Naive thymus-derived CD4-positive, alpha-beta T cell (primary cell): ENCODE measurements at regions of chr17 and their contacts with region 1.

Region 1: GRCh38 chr17:32461853-32462617 is 17.7 kb downstream of the PSMD11 start:
- DNase-seq: peak; percentile 27 to 71 (median 63)
- ATAC-seq: peak; percentile 91
- H3K4me3 ChIP-seq: no peak overlapping the region
- H3K4me3 Mint-ChIP-seq: peak overlapping the region in 1 of 10 donors; percentile 15
- H3K27ac ChIP-seq: no peak overlapping the region
- H3K27ac Mint-ChIP-seq: peak overlapping the region in 7 of 9 donors; percentile 0 to 87 (median 19)
- H3K4me1 ChIP-seq: peaks cover 8 to 9% of the 10 kb centered on the region in 2 donors
- H3K4me1 Mint-ChIP-seq: peaks cover 25 to 43% (median 31%) of the 10 kb centered on the region in 7 donors
- H3K27me3 ChIP-seq: no peaks in the 10 kb centered on the region
- H3K27me3 Mint-ChIP-seq: no peaks in the 10 kb centered on the region

Region 2: GRCh38 chr17:32239456-32239855 is 222.6 kb before region 1 on chr17:
- CTCF ChIA-PET with region 1: no interaction called
- POLR2A ChIA-PET with region 1: no interaction called
- intact Hi-C with region 1: no loop called
- DNase-seq: no peak
- ATAC-seq: no peak
- H3K4me3 ChIP-seq: no peak overlapping the region
- H3K4me3 Mint-ChIP-seq: no peak overlapping the region
- H3K27ac ChIP-seq: no peak overlapping the region
- H3K27ac Mint-ChIP-seq: no peak overlapping the region
- H3K4me1 ChIP-seq: no peaks in the 10 kb centered on the region
- H3K4me1 Mint-ChIP-seq: no peaks in the 10 kb centered on the region
- H3K27me3 ChIP-seq: no peaks in the 10 kb centered on the region
- H3K27me3 Mint-ChIP-seq: peaks cover 0 to 7% (median 0%) of the 10 kb centered on the region in 5 donors

Region 3: GRCh38 chr17:32444308-32445073 is 17.5 kb before region 1 on chr17 and contains the start of gene PSMD11:
- CTCF ChIA-PET with region 1: interaction called, 20 read pairs
- POLR2A ChIA-PET with region 1: interaction called, 4 read pairs
- intact Hi-C with region 1: loop called (anchors 1 to 2 kb)
- DNase-seq: peak; percentile 98 to 100 (median 99)
- ATAC-seq: peak; percentile 99
- H3K4me3 ChIP-seq: peak within 1 kb of the TSS; percentile 80
- H3K4me3 Mint-ChIP-seq: peak within 1 kb of the TSS; percentile 78 to 93 (median 86)
- H3K27ac ChIP-seq: peak within 1 kb of the TSS; percentile 94
- H3K27ac Mint-ChIP-seq: peak within 1 kb of the TSS; percentile 52 to 83 (median 78)
- H3K4me1 ChIP-seq: peaks cover 13 to 14% of the 10 kb centered on the region in 2 donors
- H3K4me1 Mint-ChIP-seq: peaks cover 25 to 46% (median 36%) of the 10 kb centered on the region in 7 donors
- H3K27me3 ChIP-seq: no peaks in the 10 kb centered on the region
- H3K27me3 Mint-ChIP-seq: peaks cover 0 to 23% (median 0%) of the 10 kb centered on the region in 5 donors
- total RNA-seq, gene PSMD11: 60.1 to 112 (median 67.5) TPM

Region 4: GRCh38 chr17:32503251-32504165 is 41.5 kb after region 1 on chr17:
- CTCF ChIA-PET with region 1: interaction called, 4 read pairs
- POLR2A ChIA-PET with region 1: no interaction called
- intact Hi-C with region 1: loop called in 1 of 2 experiments (anchors 1 kb)
- DNase-seq: peak in 8 of 9 donors; percentile 45 to 83 (median 78)
- ATAC-seq: peak; percentile 94
- H3K4me3 ChIP-seq: peak overlapping the region; percentile 36
- H3K4me3 Mint-ChIP-seq: peak overlapping the region; percentile 64 to 83 (median 73)
- H3K27ac ChIP-seq: peak overlapping the region; percentile 70
- H3K27ac Mint-ChIP-seq: peak overlapping the region; percentile 93 to 100 (median 98)
- H3K4me1 ChIP-seq: peaks cover 45 to 70% of the 10 kb centered on the region in 2 donors
- H3K4me1 Mint-ChIP-seq: peaks cover 50 to 91% (median 77%) of the 10 kb centered on the region in 7 donors
- H3K27me3 ChIP-seq: no peaks in the 10 kb centered on the region
- H3K27me3 Mint-ChIP-seq: no peaks in the 10 kb centered on the region

Region 5: GRCh38 chr17:32755045-32755805 is 293.2 kb after region 1 on chr17:
- CTCF ChIA-PET with region 1: interaction called, 17 read pairs
- POLR2A ChIA-PET with region 1: no interaction called
- intact Hi-C with region 1: no loop called
- DNase-seq: peak in 7 of 9 donors; percentile 33 to 64 (median 57)
- ATAC-seq: peak; percentile 94
- H3K4me3 ChIP-seq: no peak overlapping the region
- H3K4me3 Mint-ChIP-seq: no peak overlapping the region
- H3K27ac ChIP-seq: no peak overlapping the region
- H3K27ac Mint-ChIP-seq: no peak overlapping the region
- H3K4me1 ChIP-seq: peaks cover 7% of the 10 kb centered on the region in 2 donors
- H3K4me1 Mint-ChIP-seq: peaks cover 5 to 13% (median 12%) of the 10 kb centered on the region in 7 donors
- H3K27me3 ChIP-seq: no peaks in the 10 kb centered on the region
- H3K27me3 Mint-ChIP-seq: no peaks in the 10 kb centered on the region